ENCODE measurements at regions of chr7 and their contacts with region 1.

Region 1: DNA sequence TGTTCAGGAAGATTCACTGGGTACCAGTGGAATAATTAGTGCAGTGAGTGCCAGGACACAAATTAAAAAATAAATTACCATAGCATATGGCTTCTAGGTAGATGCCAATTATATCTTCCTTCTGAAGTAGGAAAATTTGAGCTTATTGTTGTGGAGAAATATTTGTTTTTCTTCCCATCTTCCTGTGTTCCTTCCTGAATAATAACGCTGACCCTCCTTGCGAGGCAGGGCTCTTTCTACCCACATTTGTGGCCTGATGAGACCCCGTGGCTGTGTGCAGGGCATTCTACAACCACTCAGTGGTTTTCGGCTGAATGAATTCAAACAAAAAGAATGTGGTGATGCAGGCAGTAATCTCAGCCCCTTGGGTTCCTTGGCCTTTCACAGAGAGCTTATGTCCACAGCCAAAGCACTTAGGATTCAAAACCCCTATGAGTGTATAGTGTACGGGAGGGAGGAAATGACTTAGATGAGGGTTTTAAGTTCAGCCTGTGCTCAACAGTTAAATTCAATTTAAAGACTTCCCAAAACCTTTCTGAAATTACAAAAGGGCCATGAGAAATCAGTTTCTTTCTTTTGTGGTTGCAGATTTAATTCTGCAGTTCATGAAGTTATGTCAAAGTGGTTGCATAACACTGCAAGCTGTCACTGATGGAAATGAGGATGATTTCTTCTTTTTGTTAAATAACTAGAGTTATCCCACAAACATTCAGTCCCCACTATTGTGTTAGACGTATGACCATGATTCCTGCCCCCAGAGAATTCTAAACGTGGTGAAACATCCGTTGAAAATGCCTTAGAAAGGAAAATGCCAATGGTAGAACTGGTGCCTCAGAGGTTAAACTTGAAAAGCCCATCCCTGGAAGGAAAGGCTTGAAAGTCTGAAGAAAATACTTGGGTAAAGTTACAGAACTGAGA is 255.3 kb downstream of the FZD1 start:
- DNase-seq: no peak
- ATAC-seq: peak in 2 of 4 donors; percentile 23 to 25
- H3K4me3 ChIP-seq: no peak overlapping the region
- H3K27ac ChIP-seq: no peak overlapping the region
- H3K4me1 ChIP-seq: no peaks in the 10 kb centered on the region
- H3K27me3 ChIP-seq: no peaks in the 10 kb centered on the region
- CTCF ChIP-seq: no peak

Region 2: GRCh38 chr7:91465595-91466061 is 53.9 kb before region 1 on chr7:
- intact Hi-C with region 1: loop called in 1 of 3 experiments (anchors 10 kb)
- DNase-seq: no peak
- ATAC-seq: no peak
- H3K4me3 ChIP-seq: no peak overlapping the region
- H3K27ac ChIP-seq: no peak overlapping the region
- H3K4me1 ChIP-seq: no peaks in the 10 kb centered on the region
- H3K27me3 ChIP-seq: no peaks in the 10 kb centered on the region
- CTCF ChIP-seq: no peak